AG04450 (cell line): ENCODE measurements at regions of chr1 and their contacts with region 1.

Region 1: DNA sequence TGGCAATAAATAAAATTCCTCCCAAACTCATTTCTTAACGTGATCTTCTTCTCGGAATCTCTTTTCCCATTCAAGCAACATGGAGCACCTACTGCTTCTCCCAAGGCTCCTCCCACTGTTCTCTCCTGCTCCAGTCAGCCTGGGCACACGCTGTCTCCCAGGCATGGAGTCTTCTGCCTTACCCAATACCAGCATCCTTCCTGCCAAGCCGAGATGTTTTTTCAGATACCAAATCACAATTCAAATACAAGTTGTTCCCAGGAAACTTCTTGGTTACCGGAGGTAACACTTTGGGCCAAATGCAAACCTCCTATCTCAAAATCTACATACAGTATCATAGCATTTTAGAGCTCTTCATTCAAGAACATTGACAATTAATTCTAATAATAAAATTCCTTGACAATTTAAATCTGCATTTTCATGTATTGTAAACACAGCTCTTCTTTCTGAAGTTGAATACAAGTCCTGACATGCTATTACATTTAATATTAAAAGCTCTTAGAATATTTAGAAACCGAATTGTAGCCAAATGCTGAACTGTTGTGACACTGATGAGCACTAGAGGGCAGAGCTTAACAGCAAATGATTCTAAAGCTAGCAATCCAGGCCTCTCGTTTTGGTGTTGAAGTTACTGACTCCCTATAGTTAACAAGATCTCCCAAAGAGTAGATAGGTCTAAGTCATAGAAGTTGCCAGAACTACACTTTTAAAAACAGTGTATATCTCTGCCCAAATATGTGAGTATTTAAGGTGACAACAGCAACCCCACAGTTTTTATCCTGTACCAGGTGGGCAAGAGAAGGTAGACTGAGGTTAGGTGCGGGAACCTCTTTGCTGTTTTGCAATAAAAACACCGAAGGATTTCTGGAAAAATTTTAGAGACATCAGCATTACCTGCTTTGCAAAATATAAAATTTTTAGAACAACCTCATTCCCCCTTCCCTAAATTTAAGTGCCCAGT is 52.3 kb downstream of the BCAR3 start:
- DNase-seq: peak; percentile 67
- H3K4me3 ChIP-seq: no peak overlapping the region
- H3K27ac ChIP-seq: no peak overlapping the region
- H3K27me3 ChIP-seq: no peaks in the 10 kb centered on the region
- CTCF ChIP-seq: peak; percentile 77

Region 2: DNA sequence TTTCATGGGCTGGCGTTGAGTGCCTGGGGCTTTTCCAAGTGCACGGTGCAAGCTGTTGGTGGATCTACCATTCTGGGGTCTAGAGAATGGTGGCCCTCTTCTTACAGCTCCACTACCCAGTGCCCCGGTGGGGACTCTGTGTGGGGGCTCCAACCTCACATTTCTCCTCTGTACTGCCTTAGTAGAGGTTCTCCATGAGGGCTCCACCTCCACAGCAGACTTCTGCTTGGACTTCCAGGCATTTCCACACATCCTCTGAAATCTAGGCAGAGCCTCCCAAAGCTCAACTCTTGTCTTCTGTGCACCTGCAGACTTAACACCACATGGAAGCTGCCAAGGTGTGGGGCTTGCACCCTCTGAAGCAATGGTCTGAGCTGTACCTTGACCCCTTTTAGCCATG is 366.7 kb before region 1 on chr1:
- CTCF ChIA-PET with region 1: no interaction called
- POLR2A ChIA-PET with region 1: no interaction called
- DNase-seq: no peak
- H3K4me3 ChIP-seq: no peak overlapping the region
- H3K27ac ChIP-seq: no peak overlapping the region
- H3K27me3 ChIP-seq: no peaks in the 10 kb centered on the region
- CTCF ChIP-seq: no peak

Region 3: DNA sequence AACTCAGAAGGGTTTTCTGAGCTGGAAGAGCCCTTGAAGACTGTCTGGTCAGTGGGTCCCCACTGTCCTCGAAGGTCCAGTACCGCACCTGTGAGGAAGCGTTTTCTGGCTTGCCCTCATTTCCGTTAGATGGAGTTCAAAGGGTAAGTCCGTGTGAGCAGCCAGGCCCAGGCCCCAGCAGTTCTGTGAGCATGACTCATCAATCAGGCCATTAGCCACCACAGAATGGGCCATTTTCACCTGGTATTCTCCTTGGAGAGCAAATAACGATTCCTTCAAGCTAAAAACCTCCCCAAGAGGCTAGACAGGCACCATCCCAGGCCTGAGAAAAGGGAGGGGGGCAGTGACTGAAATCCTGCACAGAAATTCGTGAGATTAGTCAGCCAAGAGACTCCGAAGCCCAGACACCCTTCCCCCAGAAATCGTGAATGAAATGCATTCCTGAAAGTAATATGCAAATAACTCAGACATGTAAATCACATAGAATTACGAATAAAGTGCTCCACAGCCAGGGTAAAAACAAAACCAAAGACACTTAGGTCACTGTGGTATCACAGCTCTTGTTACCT is 13.7 kb before region 1 on chr1:
- CTCF ChIA-PET with region 1: interaction called, 17 read pairs
- POLR2A ChIA-PET with region 1: no interaction called
- DNase-seq: no peak
- H3K4me3 ChIP-seq: no peak overlapping the region
- H3K27ac ChIP-seq: peak overlapping the region; percentile 77
- H3K27me3 ChIP-seq: no peaks in the 10 kb centered on the region
- CTCF ChIP-seq: no peak

Region 4: DNA sequence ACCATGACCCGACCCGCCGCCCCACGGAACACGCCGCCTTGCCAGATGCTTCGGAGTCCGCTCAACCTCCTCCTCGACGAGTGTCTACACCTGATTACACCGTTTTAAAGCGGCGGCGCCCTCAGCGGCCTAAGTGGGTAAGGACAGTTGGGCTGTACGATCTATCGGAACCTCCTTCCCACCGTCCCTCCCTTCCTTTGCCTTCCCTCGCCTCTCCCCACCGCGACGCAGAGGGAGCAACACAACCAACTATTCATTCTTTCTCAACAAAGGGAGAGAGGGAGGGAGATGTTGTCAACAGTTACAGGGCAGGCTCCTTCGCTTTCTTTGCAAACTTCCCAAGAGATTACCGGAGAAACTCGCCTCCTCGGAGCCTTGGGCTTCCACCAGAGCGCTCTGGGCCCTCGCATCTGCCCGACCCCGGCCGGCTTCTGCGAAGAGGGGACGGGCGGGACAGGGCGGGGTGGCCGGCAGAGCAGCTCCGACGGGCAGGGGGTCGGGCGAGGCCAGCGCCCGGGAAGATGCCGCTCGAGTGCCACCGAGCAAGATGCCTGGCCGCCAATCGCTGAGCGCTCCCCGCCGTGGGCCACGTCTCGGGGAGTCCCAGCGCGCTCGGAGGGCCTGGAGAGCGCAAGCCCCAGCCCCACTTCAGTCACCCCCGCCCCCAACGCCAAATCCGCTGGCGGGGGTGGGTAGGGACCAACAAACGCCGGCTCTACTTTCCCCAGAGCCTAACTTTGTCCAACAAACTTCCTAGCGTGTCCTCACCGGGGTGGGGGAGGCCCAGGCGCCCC is 51.6 kb after region 1 on chr1:
- CTCF ChIA-PET with region 1: interaction called, 27 read pairs
- POLR2A ChIA-PET with region 1: no interaction called
- DNase-seq: peak; percentile 59
- H3K4me3 ChIP-seq: peak overlapping the region; percentile 78
- H3K27ac ChIP-seq: peak overlapping the region; percentile 91
- H3K27me3 ChIP-seq: no peaks in the 10 kb centered on the region
- CTCF ChIP-seq: peak; percentile 70

Region 5: GRCh38 chr1:93814059-93814794 is 184.8 kb after region 1 on chr1:
- CTCF ChIA-PET with region 1: interaction called, 270 read pairs
- POLR2A ChIA-PET with region 1: interaction called, 6 read pairs
- DNase-seq: peak; percentile 53
- H3K4me3 ChIP-seq: no peak overlapping the region
- H3K27ac ChIP-seq: no peak overlapping the region
- H3K27me3 ChIP-seq: no peaks in the 10 kb centered on the region
- CTCF ChIP-seq: peak; percentile 99

Region 6: GRCh38 chr1:93839307-93839706 is 209.9 kb after region 1 on chr1:
- CTCF ChIA-PET with region 1: interaction called, 217 read pairs
- POLR2A ChIA-PET with region 1: interaction called, 5 read pairs
- DNase-seq: peak; percentile 73
- H3K4me3 ChIP-seq: no peak overlapping the region
- H3K27ac ChIP-seq: no peak overlapping the region
- H3K27me3 ChIP-seq: no peaks in the 10 kb centered on the region
- CTCF ChIP-seq: no peak